ENCODE measurements at regions of chr5 and their contacts with region 1.

Region 1: DNA sequence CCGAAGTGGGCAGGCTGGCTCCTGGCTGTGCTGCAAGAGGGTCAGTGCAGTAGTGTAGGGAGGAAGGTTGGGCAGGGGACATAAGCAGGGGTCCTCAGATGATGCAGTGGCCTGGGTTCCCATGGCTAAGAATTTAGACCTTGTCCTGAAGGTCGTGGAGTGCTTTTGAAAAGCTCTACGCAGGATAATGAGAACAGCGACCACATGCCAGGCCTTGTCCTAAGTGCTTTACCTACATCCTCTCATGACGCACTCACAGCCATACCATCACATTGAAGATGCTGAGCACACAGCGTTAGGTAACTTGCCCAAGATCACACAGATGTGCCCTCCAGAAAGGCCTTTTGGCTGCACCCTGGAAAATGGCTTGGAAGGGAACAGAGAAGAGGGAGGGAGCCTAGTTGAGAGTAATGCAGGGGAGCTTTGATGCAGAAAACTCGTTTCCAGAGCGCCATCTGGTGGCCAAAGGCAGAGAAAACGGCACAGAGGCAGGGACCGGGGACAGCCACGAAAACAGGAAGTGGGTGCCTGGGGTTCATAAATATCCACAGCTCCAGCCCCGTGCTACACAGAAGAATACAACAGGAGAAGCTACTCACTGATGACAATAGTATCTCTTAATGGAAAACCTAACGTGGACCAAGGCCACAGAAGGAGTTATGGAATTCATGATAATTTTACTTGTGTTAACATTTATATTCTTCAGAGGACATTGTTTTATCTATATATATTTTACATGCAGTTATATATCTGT is 2.6 kb upstream of the PCDH12 start:
- DNase-seq: peak; percentile 95
- H3K4me3 Mint-ChIP-seq: no peak overlapping the region
- H3K27ac Mint-ChIP-seq: peak overlapping the region; percentile 71
- H3K4me1 Mint-ChIP-seq: peaks cover 39% of the 10 kb centered on the region
- H3K27me3 Mint-ChIP-seq: no peaks in the 10 kb centered on the region

Region 2: GRCh38 chr5:141392429-141393198 is 568.0 kb before region 1 on chr5 and contains the start of gene PCDHGA8:
- CTCF ChIA-PET with region 1: no interaction called
- POLR2A ChIA-PET with region 1: no interaction called
- intact Hi-C with region 1: no loop called
- DNase-seq: no peak
- H3K4me3 Mint-ChIP-seq: no peak within 1 kb of the TSS
- H3K27ac Mint-ChIP-seq: no peak within 1 kb of the TSS
- H3K4me1 Mint-ChIP-seq: no peaks in the 10 kb centered on the region
- H3K27me3 Mint-ChIP-seq: peaks cover 56% of the 10 kb centered on the region
- total RNA-seq, gene PCDHGA8: not detected

Region 3: DNA sequence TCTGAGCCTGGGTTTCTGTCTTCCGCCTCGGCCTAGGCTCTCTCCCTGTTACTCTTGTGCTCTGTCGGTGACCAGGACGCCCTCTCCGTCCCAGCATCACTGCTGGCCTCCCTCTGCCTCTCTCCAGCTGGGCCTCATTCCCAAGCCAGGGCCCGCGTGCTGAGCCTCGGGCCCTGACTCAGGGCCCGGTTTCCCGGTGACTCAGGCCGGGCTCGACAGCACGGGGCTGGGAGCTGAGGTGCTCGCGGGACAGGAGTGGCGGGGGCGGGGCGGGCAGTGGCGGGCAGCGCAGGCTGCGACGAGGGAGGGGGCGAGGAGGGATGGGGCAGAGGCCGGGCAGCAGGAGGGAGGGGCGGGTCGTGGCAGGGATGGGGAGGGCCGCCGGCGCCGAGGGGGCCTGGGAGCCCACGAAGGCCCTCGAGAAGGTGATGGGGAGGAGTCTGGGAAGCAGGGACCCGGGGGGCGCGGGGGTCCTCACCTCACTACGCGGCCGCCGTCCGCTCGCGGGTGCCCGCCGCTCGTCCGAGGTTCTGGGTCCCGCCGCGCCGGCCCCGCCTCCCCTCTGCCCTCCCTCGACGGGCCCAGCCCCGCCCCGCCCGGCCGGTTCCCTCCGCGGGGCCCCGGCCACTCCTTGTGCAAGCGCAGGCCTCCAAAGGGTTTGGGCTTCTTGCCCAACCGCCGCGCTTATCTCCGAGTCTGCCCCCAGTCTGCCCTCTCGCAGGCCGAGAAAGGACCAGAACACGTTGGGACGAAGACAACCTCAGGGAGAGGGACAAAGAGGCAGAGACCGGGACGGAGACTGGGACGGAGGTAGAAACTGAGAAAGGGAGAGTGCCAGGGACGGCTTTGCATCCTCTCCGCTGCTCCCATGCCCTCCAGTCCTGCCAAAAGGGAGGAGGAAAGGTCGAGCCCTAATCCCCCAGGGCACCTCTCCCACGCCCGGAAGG is 278.7 kb before region 1 on chr5 and contains the start of gene ARAP3:
- CTCF ChIA-PET with region 1: interaction called, 16 read pairs
- POLR2A ChIA-PET with region 1: no interaction called
- intact Hi-C with region 1: no loop called
- DNase-seq: peak; percentile 53
- H3K4me3 Mint-ChIP-seq: peak within 1 kb of the TSS; percentile 69
- H3K27ac Mint-ChIP-seq: peak within 1 kb of the TSS; percentile 68
- H3K4me1 Mint-ChIP-seq: peaks cover 19% of the 10 kb centered on the region
- H3K27me3 Mint-ChIP-seq: no peaks in the 10 kb centered on the region
- total RNA-seq, gene ARAP3: 5.1 to 5.2 TPM

Region 4: DNA sequence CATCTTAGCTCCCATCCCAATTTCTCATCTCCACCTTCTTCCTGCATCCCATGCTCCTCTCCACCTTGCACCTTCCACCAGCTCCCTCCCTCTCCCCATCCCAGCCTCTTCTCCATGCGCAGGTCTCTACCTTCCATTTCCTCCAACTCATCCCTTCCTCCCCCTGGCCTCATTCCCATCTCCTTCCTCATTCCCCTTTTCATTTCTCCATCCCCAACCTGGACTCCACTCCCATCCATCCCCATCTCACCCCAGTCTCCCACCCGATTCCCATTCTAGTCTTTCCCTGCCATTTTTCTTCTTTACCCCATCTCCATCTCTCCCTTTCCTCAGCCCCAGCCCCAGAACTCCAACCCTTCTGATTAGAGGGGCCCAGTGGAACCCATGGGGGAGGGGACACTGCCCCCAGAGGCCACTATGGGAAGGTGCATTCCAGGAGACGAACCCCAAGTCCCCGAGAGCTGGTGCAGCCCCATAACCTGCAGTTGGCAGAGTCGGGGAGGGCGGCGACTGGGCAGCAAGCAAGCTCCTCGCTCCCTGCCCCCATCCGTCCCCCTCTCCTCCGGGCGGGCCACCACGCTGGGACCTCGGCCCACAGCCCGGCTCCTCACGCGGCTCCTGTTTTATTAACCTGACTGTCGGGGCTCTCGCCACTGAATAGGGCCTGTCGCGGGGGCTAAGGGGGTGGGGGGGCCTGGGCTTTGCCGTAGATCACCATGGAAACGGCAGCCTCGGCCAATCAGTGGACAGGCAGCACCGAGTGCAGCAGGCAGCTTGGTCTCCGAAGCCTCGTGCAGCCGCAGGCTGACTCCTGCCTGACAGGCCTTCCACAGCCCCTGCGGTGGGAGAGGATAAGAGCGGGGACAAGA is 149.1 kb before region 1 on chr5:
- CTCF ChIA-PET with region 1: interaction called, 20 read pairs
- POLR2A ChIA-PET with region 1: no interaction called
- intact Hi-C with region 1: no loop called
- DNase-seq: peak; percentile 31
- H3K4me3 Mint-ChIP-seq: no peak overlapping the region
- H3K27ac Mint-ChIP-seq: no peak overlapping the region
- H3K4me1 Mint-ChIP-seq: no peaks in the 10 kb centered on the region
- H3K27me3 Mint-ChIP-seq: peaks cover 42% of the 10 kb centered on the region

Region 5: GRCh38 chr5:141914199-141914743 is 46.4 kb before region 1 on chr5:
- CTCF ChIA-PET with region 1: interaction called, 14 read pairs
- POLR2A ChIA-PET with region 1: no interaction called
- intact Hi-C with region 1: no loop called
- DNase-seq: peak; percentile 25
- H3K4me3 Mint-ChIP-seq: no peak overlapping the region
- H3K27ac Mint-ChIP-seq: no peak overlapping the region
- H3K4me1 Mint-ChIP-seq: peaks cover 8% of the 10 kb centered on the region
- H3K27me3 Mint-ChIP-seq: peaks cover 22% of the 10 kb centered on the region

Region 6: DNA sequence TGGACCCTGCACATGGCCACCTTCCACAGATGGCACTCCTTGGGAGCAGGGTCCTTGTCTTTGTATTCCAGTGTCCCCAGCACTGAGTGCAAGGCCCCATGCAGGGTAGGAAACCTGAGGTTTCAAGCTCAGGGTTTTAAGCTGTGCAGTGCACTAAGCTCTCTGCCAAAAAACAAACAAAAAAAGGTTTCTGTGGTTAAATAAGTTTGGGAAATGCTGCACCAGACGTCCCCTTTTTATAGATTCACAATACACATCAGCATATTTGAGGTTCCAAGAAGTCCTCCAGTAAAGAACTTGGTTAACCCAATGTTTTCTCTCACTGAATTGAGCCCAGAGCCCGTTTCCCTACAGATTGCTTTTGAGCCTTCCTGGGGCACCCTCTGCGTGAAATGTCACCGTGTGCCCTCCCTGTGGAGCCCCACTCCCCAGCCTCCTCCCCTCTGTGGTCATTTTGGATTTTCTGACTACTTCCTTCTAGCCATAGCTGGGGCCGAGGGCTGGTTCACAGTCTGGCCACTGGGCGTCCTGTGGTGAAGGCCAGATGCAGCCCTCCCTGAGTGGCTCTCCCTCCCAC is 19.8 kb before region 1 on chr5:
- CTCF ChIA-PET with region 1: interaction called, 78 read pairs
- POLR2A ChIA-PET with region 1: interaction called, 3 read pairs
- intact Hi-C with region 1: no loop called
- DNase-seq: no peak
- H3K4me3 Mint-ChIP-seq: no peak overlapping the region
- H3K27ac Mint-ChIP-seq: peak overlapping the region; percentile 21
- H3K4me1 Mint-ChIP-seq: peaks cover 2% of the 10 kb centered on the region
- H3K27me3 Mint-ChIP-seq: no peaks in the 10 kb centered on the region

Region 7: GRCh38 chr5:142053426-142054151 is 93.0 kb after region 1 on chr5:
- CTCF ChIA-PET with region 1: no interaction called
- POLR2A ChIA-PET with region 1: no interaction called
- intact Hi-C with region 1: no loop called
- DNase-seq: peak; percentile 21
- H3K4me3 Mint-ChIP-seq: no peak overlapping the region
- H3K27ac Mint-ChIP-seq: no peak overlapping the region
- H3K4me1 Mint-ChIP-seq: peaks cover 14% of the 10 kb centered on the region
- H3K27me3 Mint-ChIP-seq: no peaks in the 10 kb centered on the region

Region 8: DNA sequence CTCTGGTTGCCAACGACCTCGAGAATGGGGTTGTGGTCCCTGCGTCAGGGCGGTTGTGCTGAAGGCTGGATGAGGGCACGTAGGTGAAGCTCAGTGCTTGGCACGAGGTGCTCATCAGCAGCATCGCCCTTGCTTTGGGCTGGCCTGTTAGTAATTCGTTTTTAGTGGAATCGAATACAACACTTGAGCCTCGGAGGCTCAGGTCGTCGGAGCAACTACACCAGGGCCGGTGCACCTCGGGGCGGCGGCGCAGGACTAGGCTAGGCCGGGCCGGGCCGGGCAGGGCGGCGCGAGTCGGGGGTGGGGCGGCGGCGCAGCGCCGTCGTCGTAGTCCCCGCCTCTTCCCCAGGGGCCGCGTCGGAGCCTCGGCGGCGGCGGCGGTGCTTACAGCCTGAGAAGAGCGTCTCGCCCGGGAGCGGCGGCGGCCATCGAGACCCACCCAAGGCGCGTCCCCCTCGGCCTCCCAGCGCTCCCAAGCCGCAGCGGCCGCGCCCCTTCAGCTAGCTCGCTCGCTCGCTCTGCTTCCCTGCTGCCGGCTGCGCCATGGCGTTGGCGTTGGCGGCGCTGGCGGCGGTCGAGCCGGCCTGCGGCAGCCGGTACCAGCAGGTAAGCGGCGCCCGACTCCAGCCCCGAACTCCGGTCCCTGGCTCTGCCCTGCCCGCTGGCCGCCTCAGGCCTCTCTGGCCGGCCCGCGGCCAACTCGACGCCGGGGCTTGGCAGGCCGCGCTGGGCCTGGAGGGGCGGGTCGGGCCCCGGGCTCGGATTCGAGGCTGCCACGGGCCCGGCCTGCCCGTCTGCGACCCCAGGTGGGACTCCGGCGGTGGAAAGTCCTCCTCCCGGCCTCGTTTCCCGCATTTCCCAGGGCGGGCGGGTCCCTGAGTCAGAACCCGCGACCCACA is 148.1 kb after region 1 on chr5 and contains the start of gene NDFIP1:
- CTCF ChIA-PET with region 1: interaction called, 11 read pairs
- POLR2A ChIA-PET with region 1: no interaction called
- intact Hi-C with region 1: no loop called
- DNase-seq: peak; percentile 91
- H3K4me3 Mint-ChIP-seq: peak within 1 kb of the TSS; percentile 93
- H3K27ac Mint-ChIP-seq: peak within 1 kb of the TSS; percentile 97
- H3K4me1 Mint-ChIP-seq: peaks cover 71% of the 10 kb centered on the region
- H3K27me3 Mint-ChIP-seq: no peaks in the 10 kb centered on the region
- total RNA-seq, gene NDFIP1: 74.6 to 76.4 TPM

Measured in activated CD4-positive, alpha-beta memory T cell treated with anti-CD3 and anti-CD28 coated beads for 36 hours (primary cell).